Naive thymus-derived CD4-positive, alpha-beta T cell (primary cell): ENCODE measurements at regions of chr4 and their contacts with region 1.

Region 1: DNA sequence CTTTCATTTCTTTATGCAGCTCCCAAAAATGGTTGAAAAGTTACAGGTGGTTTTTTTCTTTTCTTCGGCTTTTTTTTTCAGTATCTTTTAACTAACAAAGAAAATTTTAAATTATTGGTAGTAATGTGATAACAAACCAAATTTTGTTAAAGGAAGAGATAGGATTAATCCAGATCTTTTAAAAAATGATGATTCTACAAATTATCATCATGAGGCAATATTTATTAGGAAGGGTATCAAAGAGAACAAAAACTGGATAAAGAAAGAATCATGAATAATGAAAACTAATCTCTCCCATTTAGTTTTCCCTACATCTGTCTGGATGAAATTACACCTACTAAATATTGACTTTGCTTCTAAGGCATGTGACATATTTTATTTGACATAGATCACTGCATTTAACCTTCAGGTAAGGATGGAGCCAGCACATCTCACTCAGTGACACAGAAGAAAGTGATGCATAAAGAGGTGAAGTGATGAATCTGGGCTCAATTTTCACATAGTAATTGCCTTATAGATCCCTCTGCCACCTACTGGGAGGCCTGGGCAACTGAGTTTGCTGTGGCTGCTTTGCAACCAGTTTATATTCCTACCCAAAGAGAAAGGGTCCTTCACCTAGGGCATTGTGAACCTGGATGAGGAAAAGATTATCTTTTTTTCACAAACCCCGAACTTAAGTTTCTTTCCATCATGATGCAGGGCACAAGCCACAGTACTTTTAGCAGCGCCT is 155.6 kb downstream of the HNRNPD start:
- DNase-seq: peak in 7 of 9 donors; percentile 2 to 36 (median 14)
- ATAC-seq: peak; percentile 50
- H3K4me3 ChIP-seq: no peak overlapping the region
- H3K4me3 Mint-ChIP-seq: no peak overlapping the region
- H3K27ac ChIP-seq: no peak overlapping the region
- H3K27ac Mint-ChIP-seq: no peak overlapping the region
- H3K4me1 ChIP-seq: peaks cover 10 to 12% of the 10 kb centered on the region in 2 donors
- H3K4me1 Mint-ChIP-seq: peaks cover 9 to 53% (median 38%) of the 10 kb centered on the region in 7 donors
- H3K27me3 ChIP-seq: no peaks in the 10 kb centered on the region
- H3K27me3 Mint-ChIP-seq: peaks cover 0 to 14% (median 0%) of the 10 kb centered on the region in 5 donors

Region 2: DNA sequence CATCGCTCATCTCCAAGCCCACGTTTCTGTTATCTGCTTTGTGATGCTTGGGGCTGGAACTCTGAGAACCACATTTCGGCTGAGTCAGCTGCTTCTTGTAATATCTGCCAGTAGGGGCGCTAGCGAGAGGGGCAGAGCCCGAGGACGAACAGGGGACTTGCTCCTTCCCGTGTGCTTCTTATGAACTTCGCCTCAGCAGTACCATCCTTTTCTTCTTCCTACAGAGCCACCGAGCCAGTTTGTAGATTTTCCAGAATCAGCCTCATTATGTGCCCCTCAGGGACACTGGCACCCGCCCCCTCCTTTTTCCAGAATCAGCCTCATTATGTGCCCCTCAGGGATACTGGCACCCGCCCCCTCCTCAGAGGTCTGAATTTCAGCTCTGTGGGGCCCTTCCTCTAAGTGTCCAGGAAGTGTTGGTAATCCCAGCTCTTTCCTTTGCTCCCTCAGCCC is 304.7 kb before region 1 on chr4:
- CTCF ChIA-PET with region 1: no interaction called
- POLR2A ChIA-PET with region 1: no interaction called
- intact Hi-C with region 1: loop called in 1 of 2 experiments (anchors 5 kb)
- DNase-seq: peak; percentile 18 to 64 (median 58)
- ATAC-seq: peak; percentile 81
- H3K4me3 ChIP-seq: no peak overlapping the region
- H3K4me3 Mint-ChIP-seq: peak overlapping the region in 1 of 10 donors; percentile 4
- H3K27ac ChIP-seq: no peak overlapping the region
- H3K27ac Mint-ChIP-seq: no peak overlapping the region
- H3K4me1 ChIP-seq: no peaks in the 10 kb centered on the region
- H3K4me1 Mint-ChIP-seq: peaks cover 0 to 9% (median 8%) of the 10 kb centered on the region in 7 donors
- H3K27me3 ChIP-seq: no peaks in the 10 kb centered on the region
- H3K27me3 Mint-ChIP-seq: peaks cover 0 to 20% (median 7%) of the 10 kb centered on the region in 5 donors

Region 3: DNA sequence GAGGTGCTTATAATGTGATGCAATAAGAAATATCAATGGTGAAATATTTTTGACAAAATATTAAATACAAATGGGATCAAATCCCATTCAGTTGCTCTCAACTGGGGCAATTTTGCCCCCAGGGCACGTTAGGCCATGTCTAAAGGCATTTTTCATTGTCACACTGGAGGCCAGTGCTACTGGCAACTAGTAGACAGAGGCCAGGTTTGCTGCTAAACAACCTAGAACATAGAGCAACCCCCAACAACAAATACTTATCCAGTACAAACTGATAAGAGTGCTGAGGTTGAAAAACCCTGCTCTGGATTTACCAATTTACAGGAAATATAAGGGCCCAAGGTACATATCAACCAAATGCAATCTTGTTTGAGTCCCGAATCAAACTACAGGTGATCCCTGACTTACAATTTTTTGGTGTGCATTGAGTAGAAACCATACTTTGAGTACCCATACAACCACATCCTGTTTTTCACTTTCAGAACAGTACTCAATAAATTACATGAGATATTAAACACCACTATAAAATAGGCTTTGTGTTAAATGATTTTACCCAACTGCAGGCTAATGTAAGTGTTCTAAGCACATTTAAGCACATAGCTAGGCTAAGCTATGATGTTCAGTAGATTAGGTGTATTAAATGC is 81.9 kb before region 1 on chr4:
- CTCF ChIA-PET with region 1: no interaction called
- POLR2A ChIA-PET with region 1: no interaction called
- intact Hi-C with region 1: loop called in 1 of 2 experiments (anchors 1 kb)
- DNase-seq: peak in 6 of 9 donors; percentile 41 to 65 (median 48)
- ATAC-seq: peak; percentile 49
- H3K4me3 ChIP-seq: no peak overlapping the region
- H3K4me3 Mint-ChIP-seq: peak overlapping the region in 9 of 10 donors; percentile 0 to 80 (median 53)
- H3K27ac ChIP-seq: peak overlapping the region; percentile 30
- H3K27ac Mint-ChIP-seq: peak overlapping the region in 8 of 9 donors; percentile 71 to 98 (median 89)
- H3K4me1 ChIP-seq: peaks cover 7 to 19% of the 10 kb centered on the region in 2 donors
- H3K4me1 Mint-ChIP-seq: peaks cover 8 to 58% (median 24%) of the 10 kb centered on the region in 7 donors
- H3K27me3 ChIP-seq: no peaks in the 10 kb centered on the region
- H3K27me3 Mint-ChIP-seq: no peaks in the 10 kb centered on the region

Region 4: DNA sequence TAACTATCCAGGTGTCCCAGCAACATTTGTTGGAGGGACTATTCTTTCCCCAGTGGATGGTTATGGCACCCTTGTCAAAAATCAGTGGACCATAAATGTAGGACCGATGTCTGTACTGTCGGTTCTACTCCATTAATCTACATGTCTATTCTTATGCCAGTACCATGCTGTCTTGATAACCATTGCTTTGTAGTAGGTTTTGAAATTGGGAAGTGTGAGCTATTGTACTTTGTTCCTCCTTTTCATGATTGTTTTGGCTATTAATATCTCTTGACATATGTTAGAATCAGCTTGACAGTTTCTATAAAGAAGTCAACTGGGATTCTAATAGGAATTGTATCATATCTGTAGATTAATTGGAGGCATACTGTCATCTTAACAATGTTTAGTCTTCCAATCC is 42.9 kb after region 1 on chr4:
- CTCF ChIA-PET with region 1: no interaction called
- POLR2A ChIA-PET with region 1: no interaction called
- intact Hi-C with region 1: no loop called
- DNase-seq: no peak
- ATAC-seq: no peak
- H3K4me3 ChIP-seq: no peak overlapping the region
- H3K4me3 Mint-ChIP-seq: no peak overlapping the region
- H3K27ac ChIP-seq: no peak overlapping the region
- H3K27ac Mint-ChIP-seq: no peak overlapping the region
- H3K4me1 ChIP-seq: no peaks in the 10 kb centered on the region
- H3K4me1 Mint-ChIP-seq: no peaks in the 10 kb centered on the region
- H3K27me3 ChIP-seq: no peaks in the 10 kb centered on the region
- H3K27me3 Mint-ChIP-seq: peaks cover 0 to 30% (median 5%) of the 10 kb centered on the region in 5 donors

Region 5: GRCh38 chr4:82284858-82285805 is 67.0 kb after region 1 on chr4:
- CTCF ChIA-PET with region 1: no interaction called
- POLR2A ChIA-PET with region 1: no interaction called
- intact Hi-C with region 1: loop called in 1 of 2 experiments (anchors 1 kb)
- DNase-seq: peak; percentile 97 to 100 (median 99)
- ATAC-seq: peak; percentile 94
- H3K4me3 ChIP-seq: peak overlapping the region; percentile 55
- H3K4me3 Mint-ChIP-seq: peak overlapping the region; percentile 70 to 91 (median 86)
- H3K27ac ChIP-seq: peak overlapping the region; percentile 71
- H3K27ac Mint-ChIP-seq: peak overlapping the region; percentile 53 to 94 (median 83)
- H3K4me1 ChIP-seq: peaks cover 4 to 11% of the 10 kb centered on the region in 2 donors
- H3K4me1 Mint-ChIP-seq: peaks cover 9 to 22% (median 13%) of the 10 kb centered on the region in 7 donors
- H3K27me3 ChIP-seq: no peaks in the 10 kb centered on the region
- H3K27me3 Mint-ChIP-seq: peaks cover 0 to 28% (median 0%) of the 10 kb centered on the region in 5 donors

Region 6: DNA sequence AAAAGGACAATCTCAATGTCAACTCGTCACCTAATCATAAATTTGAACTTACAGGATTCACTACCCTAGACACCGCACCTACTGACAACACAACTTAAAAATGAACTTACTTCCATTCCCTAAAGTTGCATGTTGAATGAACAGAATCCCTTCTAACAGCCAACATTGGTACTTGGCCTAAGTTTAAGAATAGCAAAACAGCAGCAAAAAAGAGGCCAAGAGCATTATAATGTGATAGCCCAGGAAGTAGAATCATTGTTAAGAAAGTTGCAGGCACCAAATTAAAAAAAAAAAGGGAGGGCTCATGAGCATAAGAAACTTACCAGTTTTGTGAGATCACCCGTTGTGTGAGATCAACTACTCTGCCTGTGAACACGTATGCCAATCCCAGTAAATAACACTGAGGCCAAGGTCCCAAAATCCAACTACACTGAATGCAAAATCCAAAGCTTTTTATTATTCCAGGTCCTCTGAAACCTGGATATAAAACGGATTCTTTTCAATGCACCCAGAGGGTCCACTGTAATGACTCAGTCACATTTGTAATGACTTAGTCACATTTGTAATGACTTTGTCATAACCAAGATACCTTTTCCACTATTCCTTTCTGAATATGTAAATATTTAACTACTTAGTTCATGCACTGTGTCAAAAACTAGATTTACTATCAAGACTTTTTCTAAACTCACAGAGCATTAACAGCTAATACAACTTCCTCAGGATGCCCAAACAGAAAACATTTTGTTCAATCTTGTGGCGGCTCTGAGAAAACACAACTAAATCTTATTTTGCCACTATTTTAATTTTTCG is 205.3 kb after region 1 on chr4:
- CTCF ChIA-PET with region 1: no interaction called
- POLR2A ChIA-PET with region 1: no interaction called
- intact Hi-C with region 1: no loop called
- DNase-seq: no peak
- ATAC-seq: no peak
- H3K4me3 ChIP-seq: no peak overlapping the region
- H3K4me3 Mint-ChIP-seq: no peak overlapping the region
- H3K27ac ChIP-seq: no peak overlapping the region
- H3K27ac Mint-ChIP-seq: peak overlapping the region in 6 of 9 donors; percentile 4 to 75 (median 54)
- H3K4me1 ChIP-seq: peaks cover 22% of the 10 kb centered on the region in 2 donors
- H3K4me1 Mint-ChIP-seq: peaks cover 27 to 64% (median 52%) of the 10 kb centered on the region in 7 donors
- H3K27me3 ChIP-seq: no peaks in the 10 kb centered on the region
- H3K27me3 Mint-ChIP-seq: peaks cover 0 to 7% (median 0%) of the 10 kb centered on the region in 5 donors